ENCODE measurements at regions of chr1 and their contacts with region 1.

Region 1: GRCh38 chr1:110619412-110620249 is 13.5 kb upstream of the KCNA2 start:
- DNase-seq: peak; percentile 69
- ATAC-seq: peak; percentile 95
- H3K4me3 ChIP-seq: peak overlapping the region; percentile 64
- H3K27ac ChIP-seq: peak overlapping the region; percentile 57
- H3K4me1 ChIP-seq: peaks cover 16% of the 10 kb centered on the region
- H3K27me3 ChIP-seq: peaks cover 0 to 2% of the 10 kb centered on the region in 2 experiments; a peak in 1 of 4 replicates
- CTCF ChIP-seq: peak; percentile 96 to 97 (median 96)
- EP300 ChIP-seq: 0 out of 4 replicates have a peak, but pooled peaks of 1 of the 2 experiments have one; percentile 26
- POLR2A ChIP-seq: peak; percentile 59
- RAD21 ChIP-seq: peak; percentile 86

Region 2: DNA sequence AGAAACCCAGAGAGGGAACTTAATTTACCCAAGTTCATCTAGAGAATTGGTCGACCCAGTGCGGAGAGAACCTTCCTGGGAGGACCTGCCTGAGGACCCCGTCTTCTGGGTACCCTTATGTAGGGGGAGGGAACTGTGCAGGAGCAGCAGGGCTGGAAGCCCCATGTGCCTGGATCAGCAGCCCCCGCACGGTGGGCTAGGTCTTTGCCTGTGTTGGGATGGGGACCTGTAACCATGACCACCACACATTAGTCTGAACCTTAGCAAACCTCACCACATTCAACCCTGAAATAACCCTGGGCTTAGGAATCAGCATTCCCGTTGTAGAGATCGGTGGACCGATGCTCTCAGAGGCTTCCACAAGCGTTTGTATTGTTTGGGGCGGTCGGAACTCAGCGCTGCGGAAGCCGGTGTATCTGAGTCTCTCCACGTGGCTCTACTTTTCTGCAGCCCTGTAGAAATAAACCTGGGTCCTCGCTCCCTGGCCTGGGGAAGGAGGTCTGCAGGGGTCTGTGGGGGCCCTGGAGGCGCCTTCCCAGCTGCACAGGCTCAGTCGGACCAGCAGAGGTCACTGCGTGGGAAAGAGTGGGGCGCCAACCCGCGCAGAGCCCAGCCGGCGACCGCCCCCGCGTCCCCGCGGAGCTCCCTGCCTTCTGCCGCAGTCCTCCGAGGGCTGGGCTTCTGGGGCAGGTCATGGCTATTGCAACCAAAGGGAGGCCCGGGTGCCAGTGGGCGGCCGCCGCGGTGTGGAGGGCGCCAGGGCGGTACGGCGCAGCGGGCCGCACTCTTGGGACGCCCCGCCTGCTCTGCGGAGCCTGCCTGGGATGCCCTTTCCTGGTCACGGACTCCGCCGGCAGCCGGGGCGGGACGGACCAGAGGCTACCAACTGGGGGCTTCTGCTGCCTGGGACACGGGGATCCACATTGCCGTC is 64.5 kb before region 1 on chr1:
- CTCF ChIA-PET with region 1: interaction called, 10 read pairs
- POLR2A ChIA-PET with region 1: no interaction called
- RAD21 ChIA-PET with region 1: no interaction called
- SMC1A ChIA-PET with region 1: no interaction called
- in situ Hi-C with region 1: no loop called
- intact Hi-C with region 1: loop called (anchors 1 kb)
- DNase-seq: no peak
- ATAC-seq: peak; percentile 94
- H3K4me3 ChIP-seq: no peak overlapping the region
- H3K27ac ChIP-seq: no peak overlapping the region
- H3K4me1 ChIP-seq: no peaks in the 10 kb centered on the region
- H3K27me3 ChIP-seq: peaks cover 13 to 28% of the 10 kb centered on the region in 2 experiments
- CTCF ChIP-seq: peak; percentile 54 to 74 (median 58)
- EP300 ChIP-seq: no peak
- POLR2A ChIP-seq: no peak
- RAD21 ChIP-seq: 0 out of 2 replicates have a peak, but pooled peaks have one; percentile 23

Region 3: DNA sequence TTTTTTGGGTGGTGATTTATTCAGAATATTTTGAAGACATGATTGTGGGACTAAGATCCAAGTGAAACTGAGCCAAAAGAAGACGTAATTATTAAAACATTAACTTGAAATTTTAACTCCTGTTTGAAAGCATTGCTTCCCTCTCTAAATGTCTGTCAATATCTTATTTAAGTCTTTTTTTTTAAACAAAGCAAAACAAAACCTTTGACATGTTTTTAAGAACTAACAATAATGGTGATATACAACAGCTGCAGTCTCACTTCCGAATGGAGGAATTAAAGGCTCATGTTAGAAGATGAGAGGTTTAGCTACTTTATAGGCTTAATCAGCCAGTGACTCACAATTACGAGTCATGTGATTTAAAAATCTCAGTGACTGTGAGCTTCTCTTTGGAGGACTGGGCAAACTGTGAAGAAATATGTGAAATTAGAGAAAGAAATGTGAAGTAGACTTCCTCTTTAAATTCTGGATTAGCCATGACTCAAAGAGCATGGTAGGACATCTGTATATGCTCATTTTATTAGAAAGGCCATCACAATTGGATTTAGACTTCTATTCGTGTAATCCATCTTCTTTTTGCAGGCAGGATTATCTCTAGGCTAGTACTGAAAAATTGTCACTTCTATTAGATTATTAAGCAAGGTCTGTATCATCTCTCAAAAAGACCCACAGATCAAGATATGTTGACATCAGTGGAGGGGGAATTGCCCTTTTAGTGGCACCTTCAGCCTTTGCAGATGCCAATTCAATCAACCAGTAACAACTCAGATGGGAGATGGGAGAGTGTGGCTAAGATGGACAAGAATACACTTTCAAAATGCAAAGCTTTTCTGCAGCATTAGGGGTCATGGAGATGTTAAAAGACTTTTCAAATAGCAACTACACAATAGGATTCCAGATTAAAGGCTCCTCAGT is 26.4 kb after region 1 on chr1:
- CTCF ChIA-PET with region 1: interaction called, 16 read pairs
- POLR2A ChIA-PET with region 1: no interaction called
- RAD21 ChIA-PET with region 1: interaction called, 8 read pairs
- SMC1A ChIA-PET with region 1: interaction called, 3 read pairs
- in situ Hi-C with region 1: no loop called
- intact Hi-C with region 1: no loop called
- DNase-seq: no peak
- ATAC-seq: no peak
- H3K4me3 ChIP-seq: no peak overlapping the region
- H3K27ac ChIP-seq: no peak overlapping the region
- H3K4me1 ChIP-seq: peaks cover 23% of the 10 kb centered on the region
- H3K27me3 ChIP-seq: no peaks in the 10 kb centered on the region
- CTCF ChIP-seq: no peak
- EP300 ChIP-seq: no peak
- POLR2A ChIP-seq: no peak
- RAD21 ChIP-seq: no peak

Region 4: DNA sequence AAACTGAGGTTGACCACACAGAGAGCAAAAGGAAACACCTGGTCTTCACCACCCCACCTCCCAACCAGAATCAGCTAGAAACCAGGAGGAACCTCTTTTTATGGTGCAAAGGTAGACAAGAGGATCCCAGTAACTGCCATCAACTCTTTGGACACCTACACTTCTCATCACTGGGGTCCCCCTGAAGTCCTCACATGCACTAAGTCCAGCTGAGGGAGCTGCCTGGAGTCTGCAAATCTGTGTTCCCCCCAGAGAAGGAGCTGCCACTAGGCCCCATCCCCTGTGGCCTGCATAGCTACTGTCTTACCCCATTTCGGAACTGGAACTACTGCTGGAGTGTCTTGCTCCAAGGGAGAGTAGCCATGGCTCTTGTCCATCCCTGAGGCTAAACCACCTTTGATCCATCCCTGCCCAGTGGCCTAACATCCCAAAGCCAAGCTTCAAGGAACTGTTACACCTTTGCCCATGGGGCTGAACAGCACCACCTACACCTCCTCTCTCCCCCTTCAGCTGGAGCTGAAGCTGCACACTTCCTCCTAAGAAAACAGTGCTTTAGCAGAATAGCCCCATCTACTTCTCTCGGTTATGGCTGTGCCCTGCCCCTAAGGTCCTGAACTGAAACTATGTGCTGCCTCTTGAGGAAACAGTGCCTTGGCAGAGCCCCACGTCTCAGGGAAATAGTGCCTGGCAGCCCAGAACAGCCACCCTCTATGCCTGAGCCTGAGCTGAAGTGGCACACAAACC is 167.9 kb after region 1 on chr1:
- CTCF ChIA-PET with region 1: interaction called, 91 read pairs
- POLR2A ChIA-PET with region 1: interaction called, 4 read pairs
- RAD21 ChIA-PET with region 1: interaction called, 79 read pairs
- SMC1A ChIA-PET with region 1: interaction called, 89 read pairs
- in situ Hi-C with region 1: loop called (anchors 5 kb)
- intact Hi-C with region 1: loop called (anchors 1 kb)
- DNase-seq: peak; percentile 76
- ATAC-seq: peak; percentile 83
- H3K4me3 ChIP-seq: no peak overlapping the region
- H3K27ac ChIP-seq: peak overlapping the region; percentile 98
- H3K4me1 ChIP-seq: peaks cover 29% of the 10 kb centered on the region
- H3K27me3 ChIP-seq: no peaks in the 10 kb centered on the region
- CTCF ChIP-seq: no peak
- EP300 ChIP-seq: no peak
- POLR2A ChIP-seq: no peak
- RAD21 ChIP-seq: no peak